ENCODE measurements at regions of chr3 and their contacts with region 1.

Region 1: GRCh38 chr3:9843715-9844438 is at the start of gene RPUSD3:
- DNase-seq: peak; percentile 90 to 99 (median 94)
- ATAC-seq: peak; percentile 100
- H3K4me3 ChIP-seq: peak within 1 kb of the TSS; percentile 83
- H3K4me3 Mint-ChIP-seq: peak within 1 kb of the TSS; percentile 93 to 100 (median 97)
- H3K27ac ChIP-seq: peak within 1 kb of the TSS; percentile 82
- H3K27ac Mint-ChIP-seq: peak within 1 kb of the TSS; percentile 68 to 94 (median 91)
- H3K4me1 ChIP-seq: peaks cover 4 to 5% of the 10 kb centered on the region in 2 donors
- H3K4me1 Mint-ChIP-seq: peaks cover 12 to 40% (median 23%) of the 10 kb centered on the region in 7 donors
- H3K27me3 ChIP-seq: no peaks in the 10 kb centered on the region
- H3K27me3 Mint-ChIP-seq: no peaks in the 10 kb centered on the region
- total RNA-seq, gene RPUSD3: 17.7 to 61.2 (median 58.0) TPM

Region 2: GRCh38 chr3:9362731-9363530 is 480.9 kb before region 1 on chr3 and contains the start of gene THUMPD3:
- CTCF ChIA-PET with region 1: no interaction called
- POLR2A ChIA-PET with region 1: no interaction called
- intact Hi-C with region 1: no loop called
- DNase-seq: peak; percentile 77 to 97 (median 85)
- ATAC-seq: peak; percentile 94
- H3K4me3 ChIP-seq: peak within 1 kb of the TSS; percentile 99
- H3K4me3 Mint-ChIP-seq: peak within 1 kb of the TSS; percentile 94 to 100 (median 98)
- H3K27ac ChIP-seq: peak within 1 kb of the TSS; percentile 85
- H3K27ac Mint-ChIP-seq: peak within 1 kb of the TSS; percentile 96 to 100 (median 98)
- H3K4me1 ChIP-seq: peaks cover 7 to 14% of the 10 kb centered on the region in 2 donors
- H3K4me1 Mint-ChIP-seq: peaks cover 0 to 44% (median 30%) of the 10 kb centered on the region in 7 donors
- H3K27me3 ChIP-seq: no peaks in the 10 kb centered on the region
- H3K27me3 Mint-ChIP-seq: peaks cover 0 to 3% (median 0%) of the 10 kb centered on the region in 5 donors
- total RNA-seq, gene THUMPD3: 39.4 to 54.8 (median 42.4) TPM

Region 3: GRCh38 chr3:9485248-9485647 is 358.6 kb before region 1 on chr3:
- CTCF ChIA-PET with region 1: no interaction called
- POLR2A ChIA-PET with region 1: no interaction called
- intact Hi-C with region 1: no loop called
- DNase-seq: no peak
- ATAC-seq: no peak
- H3K4me3 ChIP-seq: no peak overlapping the region
- H3K4me3 Mint-ChIP-seq: no peak overlapping the region
- H3K27ac ChIP-seq: no peak overlapping the region
- H3K27ac Mint-ChIP-seq: peak overlapping the region in 1 of 9 donors; percentile 15
- H3K4me1 ChIP-seq: no peaks in the 10 kb centered on the region
- H3K4me1 Mint-ChIP-seq: no peaks in the 10 kb centered on the region
- H3K27me3 ChIP-seq: no peaks in the 10 kb centered on the region
- H3K27me3 Mint-ChIP-seq: no peaks in the 10 kb centered on the region

Region 4: DNA sequence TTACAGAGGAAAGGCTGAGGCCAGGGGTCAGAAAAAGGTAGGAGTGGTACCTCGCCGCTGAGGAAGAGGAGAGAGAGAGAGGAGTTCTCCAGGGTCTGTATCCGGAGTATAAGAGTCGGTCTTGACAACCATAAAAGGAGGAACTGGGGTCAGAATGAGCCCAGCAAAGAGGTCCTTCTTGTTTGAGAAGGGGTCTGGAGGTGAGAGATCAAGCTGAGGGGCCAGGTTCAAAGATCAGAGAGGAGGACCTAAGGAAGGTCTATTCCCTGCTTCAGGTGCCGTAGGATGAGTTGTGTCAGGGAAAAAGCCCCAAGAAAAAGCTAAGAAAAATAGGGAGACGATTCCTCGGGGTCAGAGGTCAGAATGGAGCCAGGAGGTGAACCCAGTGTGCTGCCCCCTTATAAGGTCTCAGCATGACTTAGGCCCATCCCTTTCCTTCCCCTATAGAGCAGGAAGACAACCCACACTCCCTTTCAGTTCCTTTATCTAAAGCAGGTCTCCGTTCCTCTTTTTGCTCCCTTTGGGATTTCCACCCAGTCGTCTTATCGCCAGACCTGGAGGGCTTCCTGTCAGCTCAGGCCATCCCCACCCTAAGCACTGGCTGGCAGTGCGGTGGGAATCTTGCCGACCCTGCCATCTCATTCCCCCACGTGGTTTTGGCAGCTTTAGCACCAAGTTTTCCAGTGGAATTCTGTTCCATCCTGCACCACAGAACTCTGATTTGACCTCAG is 193.9 kb before region 1 on chr3:
- CTCF ChIA-PET with region 1: no interaction called
- POLR2A ChIA-PET with region 1: no interaction called
- intact Hi-C with region 1: loop called (anchors 1 kb)
- DNase-seq: peak in 2 of 9 donors; percentile 4 to 5
- ATAC-seq: peak; percentile 15
- H3K4me3 ChIP-seq: peak overlapping the region; percentile 97
- H3K4me3 Mint-ChIP-seq: peak overlapping the region; percentile 86 to 98 (median 95)
- H3K27ac ChIP-seq: peak overlapping the region; percentile 85
- H3K27ac Mint-ChIP-seq: peak overlapping the region; percentile 91 to 98 (median 97)
- H3K4me1 ChIP-seq: peaks cover 15 to 19% of the 10 kb centered on the region in 2 donors
- H3K4me1 Mint-ChIP-seq: peaks cover 19 to 51% (median 37%) of the 10 kb centered on the region in 7 donors
- H3K27me3 ChIP-seq: no peaks in the 10 kb centered on the region
- H3K27me3 Mint-ChIP-seq: peaks cover 0 to 3% (median 0%) of the 10 kb centered on the region in 5 donors

Region 5: GRCh38 chr3:9809615-9810432 is 34.1 kb before region 1 on chr3 and contains the start of gene TTLL3:
- CTCF ChIA-PET with region 1: no interaction called
- POLR2A ChIA-PET with region 1: interaction called, 7 read pairs
- intact Hi-C with region 1: loop called (anchors 2 to 5 kb)
- DNase-seq: peak; percentile 33 to 50 (median 43)
- ATAC-seq: peak; percentile 76
- H3K4me3 ChIP-seq: peak within 1 kb of the TSS; percentile 76
- H3K4me3 Mint-ChIP-seq: peak within 1 kb of the TSS; percentile 89 to 96 (median 92)
- H3K27ac ChIP-seq: peak within 1 kb of the TSS; percentile 90
- H3K27ac Mint-ChIP-seq: peak within 1 kb of the TSS; percentile 92 to 98 (median 96)
- H3K4me1 ChIP-seq: peaks cover 21 to 28% of the 10 kb centered on the region in 2 donors
- H3K4me1 Mint-ChIP-seq: peaks cover 31 to 41% (median 38%) of the 10 kb centered on the region in 7 donors
- H3K27me3 ChIP-seq: no peaks in the 10 kb centered on the region
- H3K27me3 Mint-ChIP-seq: no peaks in the 10 kb centered on the region
- total RNA-seq, gene TTLL3: 54.9 to 106 (median 68.0) TPM

Region 6: DNA sequence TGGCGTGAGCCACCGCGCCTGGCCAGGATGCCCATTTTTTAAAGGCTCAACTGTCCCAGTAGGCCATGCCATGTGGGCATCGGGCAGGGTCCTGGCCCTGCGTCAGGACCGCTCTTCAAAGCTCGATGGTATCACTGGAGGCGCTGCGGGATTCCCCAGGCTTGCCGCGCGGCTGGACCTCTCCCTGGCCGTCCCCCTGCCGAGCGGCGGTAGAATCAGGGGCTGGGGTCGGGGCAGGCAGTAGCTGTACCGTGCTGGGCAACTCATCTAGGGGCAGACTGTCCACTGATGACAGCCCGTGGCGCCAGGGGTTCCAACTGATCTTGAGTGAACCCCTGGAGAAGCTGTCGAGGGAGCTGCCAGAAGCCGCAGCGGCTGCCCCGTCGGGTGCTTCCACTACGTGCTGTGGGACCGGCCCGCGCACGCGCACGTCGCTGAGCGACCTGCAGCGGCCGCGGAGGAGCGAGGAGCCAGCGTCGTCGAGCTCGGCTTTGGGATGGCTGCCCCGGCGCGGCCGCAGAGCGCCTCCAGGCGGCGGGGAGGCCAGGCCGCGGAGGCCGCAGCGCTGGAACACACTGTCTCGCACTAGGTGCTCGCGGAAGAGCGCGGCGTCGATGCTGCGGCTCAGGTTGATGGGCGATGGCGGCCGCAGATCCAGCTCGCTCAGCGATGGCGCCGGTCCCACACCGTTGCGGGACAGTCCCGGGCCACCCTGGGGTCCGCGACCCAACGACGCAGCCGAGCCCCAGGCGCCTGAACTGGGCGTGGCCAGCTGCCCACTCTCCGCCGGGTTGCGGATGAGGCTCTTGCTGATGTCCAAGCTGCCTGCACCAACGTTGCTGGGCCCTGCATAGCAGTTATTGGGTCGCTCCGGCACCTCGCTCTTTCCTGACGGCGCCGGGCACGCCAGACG is 102.5 kb after region 1 on chr3:
- CTCF ChIA-PET with region 1: interaction called, 4 read pairs
- POLR2A ChIA-PET with region 1: no interaction called
- intact Hi-C with region 1: loop called (anchors 1 kb)
- DNase-seq: peak; percentile 70 to 88 (median 80)
- ATAC-seq: peak; percentile 94
- H3K4me3 ChIP-seq: peak overlapping the region; percentile 50
- H3K4me3 Mint-ChIP-seq: peak overlapping the region; percentile 42 to 85 (median 78)
- H3K27ac ChIP-seq: peak overlapping the region; percentile 74
- H3K27ac Mint-ChIP-seq: peak overlapping the region in 8 of 9 donors; percentile 56 to 91 (median 82)
- H3K4me1 ChIP-seq: peaks cover 7% of the 10 kb centered on the region in 2 donors
- H3K4me1 Mint-ChIP-seq: peaks cover 8 to 16% (median 11%) of the 10 kb centered on the region in 7 donors
- H3K27me3 ChIP-seq: no peaks in the 10 kb centered on the region
- H3K27me3 Mint-ChIP-seq: no peaks in the 10 kb centered on the region

Region 7: GRCh38 chr3:10026084-10026890 is 182.4 kb after region 1 on chr3 and contains the start of gene FANCD2:
- CTCF ChIA-PET with region 1: no interaction called
- POLR2A ChIA-PET with region 1: no interaction called
- intact Hi-C with region 1: loop called in 1 of 2 experiments (anchors 1 kb)
- DNase-seq: peak; percentile 88 to 99 (median 94)
- ATAC-seq: peak; percentile 95
- H3K4me3 ChIP-seq: peak within 1 kb of the TSS; percentile 96
- H3K4me3 Mint-ChIP-seq: peak within 1 kb of the TSS; percentile 93 to 99 (median 96)
- H3K27ac ChIP-seq: peak within 1 kb of the TSS; percentile 89
- H3K27ac Mint-ChIP-seq: peak within 1 kb of the TSS; percentile 86 to 98 (median 97)
- H3K4me1 ChIP-seq: peaks cover 11 to 13% of the 10 kb centered on the region in 2 donors
- H3K4me1 Mint-ChIP-seq: peaks cover 0 to 45% (median 29%) of the 10 kb centered on the region in 7 donors
- H3K27me3 ChIP-seq: no peaks in the 10 kb centered on the region
- H3K27me3 Mint-ChIP-seq: no peaks in the 10 kb centered on the region
- total RNA-seq, gene FANCD2: 18.3 to 41.5 (median 34.1) TPM

Region 8: GRCh38 chr3:10142707-10143566 is 299.1 kb after region 1 on chr3:
- CTCF ChIA-PET with region 1: no interaction called
- POLR2A ChIA-PET with region 1: no interaction called
- intact Hi-C with region 1: loop called in 1 of 2 experiments (anchors 1 kb)
- DNase-seq: peak in 2 of 9 donors; percentile 11 to 12
- ATAC-seq: no peak
- H3K4me3 ChIP-seq: peak overlapping the region; percentile 87
- H3K4me3 Mint-ChIP-seq: peak overlapping the region; percentile 85 to 98 (median 96)
- H3K27ac ChIP-seq: peak overlapping the region; percentile 95
- H3K27ac Mint-ChIP-seq: peak overlapping the region; percentile 38 to 98 (median 94)
- H3K4me1 ChIP-seq: peaks cover 10 to 12% of the 10 kb centered on the region in 2 donors
- H3K4me1 Mint-ChIP-seq: peaks cover 14 to 48% (median 37%) of the 10 kb centered on the region in 7 donors
- H3K27me3 ChIP-seq: no peaks in the 10 kb centered on the region
- H3K27me3 Mint-ChIP-seq: no peaks in the 10 kb centered on the region

Region 9: DNA sequence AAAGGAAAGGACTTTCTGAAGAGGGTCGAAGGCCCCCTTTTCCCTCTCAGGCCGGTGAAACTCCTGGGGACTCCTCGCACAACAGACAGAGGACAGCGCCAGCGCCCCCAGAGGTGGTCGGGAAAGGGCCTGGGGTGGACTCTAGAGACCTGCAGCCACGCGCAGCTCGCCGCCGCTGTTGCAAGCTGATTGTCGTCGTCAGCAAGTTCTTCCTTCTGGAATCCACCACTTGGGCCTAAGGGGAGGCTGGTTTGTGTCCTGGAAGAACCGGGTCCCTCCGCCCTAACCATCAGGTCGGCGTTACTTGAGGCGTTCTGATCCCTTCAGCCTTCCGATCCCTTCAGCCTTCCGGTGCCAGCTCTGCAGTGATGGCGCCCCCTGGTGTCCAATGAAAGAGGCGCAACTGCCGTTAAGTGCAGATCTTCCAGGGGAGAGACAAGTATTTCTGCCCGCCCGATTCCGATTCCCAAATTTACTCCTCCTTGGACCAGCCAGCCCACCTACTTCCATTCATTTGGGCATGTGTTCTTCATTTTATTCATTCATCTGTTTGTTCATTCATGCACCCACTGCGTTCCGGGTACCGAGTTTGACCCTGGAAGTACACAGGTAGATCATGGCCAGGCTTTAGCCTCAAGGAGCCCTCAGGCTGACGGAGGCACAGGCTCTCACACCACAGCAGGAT is 895.0 kb after region 1 on chr3:
- CTCF ChIA-PET with region 1: no interaction called
- POLR2A ChIA-PET with region 1: no interaction called
- intact Hi-C with region 1: loop called in 1 of 2 experiments (anchors 10 kb)
- DNase-seq: peak; percentile 31 to 76 (median 58)
- ATAC-seq: peak; percentile 72
- H3K4me3 ChIP-seq: peak overlapping the region; percentile 32
- H3K4me3 Mint-ChIP-seq: peak overlapping the region; percentile 9 to 74 (median 51)
- H3K27ac ChIP-seq: no peak overlapping the region
- H3K27ac Mint-ChIP-seq: peak overlapping the region in 1 of 9 donors; percentile 51
- H3K4me1 ChIP-seq: peaks cover 0 to 6% of the 10 kb centered on the region in 2 donors
- H3K4me1 Mint-ChIP-seq: peaks cover 3 to 16% (median 9%) of the 10 kb centered on the region in 7 donors
- H3K27me3 ChIP-seq: peaks cover 0 to 10% of the 10 kb centered on the region in 2 donors
- H3K27me3 Mint-ChIP-seq: peaks cover 28 to 72% (median 53%) of the 10 kb centered on the region in 5 donors

Measured in naive thymus-derived CD4-positive, alpha-beta T cell (primary cell).